PC-9 (cell line): ENCODE measurements at regions of chr18 and their contacts with region 1.

Region 1: GRCh38 chr18:48942554-48943261 is 8.1 kb downstream of the SMAD7 start:
- DNase-seq: peak; percentile 75 to 95
- H3K4me3 ChIP-seq: no peak overlapping the region; the same call in 1 of the 2 replicates
- H3K27ac ChIP-seq: peak overlapping the region; percentile 42
- H3K4me1 ChIP-seq: peaks cover 94% of the 10 kb centered on the region
- H3K27me3 ChIP-seq: no peaks in the 10 kb centered on the region
- CTCF ChIP-seq: no peak

Region 2: DNA sequence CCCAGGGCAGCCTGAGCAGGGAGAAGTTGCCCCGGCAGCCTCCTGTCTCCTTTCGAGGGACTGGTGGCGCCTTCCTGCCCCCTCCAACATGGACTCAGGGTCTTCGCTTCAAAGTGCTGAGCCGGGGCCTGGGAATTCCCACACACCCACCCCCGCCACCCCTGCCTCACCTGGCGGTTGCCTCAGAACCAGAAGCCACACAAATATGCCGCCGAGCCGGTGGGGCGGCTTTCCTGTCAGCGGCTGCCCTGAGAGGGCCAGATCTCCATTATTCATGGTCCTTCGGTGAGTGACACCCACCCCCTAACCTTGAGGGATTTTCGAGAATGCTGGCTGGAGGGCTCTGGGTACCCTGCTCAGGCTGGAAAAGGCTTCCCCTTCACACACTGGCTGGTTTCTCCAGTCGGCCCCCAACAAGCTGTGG is 63.7 kb before region 1 on chr18:
- CTCF ChIA-PET with region 1: no interaction called
- POLR2A ChIA-PET with region 1: no interaction called
- intact Hi-C with region 1: loop called (anchors 2 kb)
- DNase-seq: peak; percentile 77 to 86
- H3K4me3 ChIP-seq: peak overlapping the region; percentile 51
- H3K27ac ChIP-seq: peak overlapping the region; percentile 94
- H3K4me1 ChIP-seq: peaks cover 42% of the 10 kb centered on the region
- H3K27me3 ChIP-seq: no peaks in the 10 kb centered on the region
- CTCF ChIP-seq: no peak

Region 3: GRCh38 chr18:48997985-48998831 is 55.5 kb after region 1 on chr18:
- CTCF ChIA-PET with region 1: no interaction called
- POLR2A ChIA-PET with region 1: interaction called, 3 read pairs
- intact Hi-C with region 1: loop called (anchors 2 kb)
- DNase-seq: peak; percentile 91 to 98
- H3K4me3 ChIP-seq: peak overlapping the region; percentile 32; the same call in 1 of the 2 replicates
- H3K27ac ChIP-seq: peak overlapping the region; percentile 97
- H3K4me1 ChIP-seq: peaks cover 60% of the 10 kb centered on the region
- H3K27me3 ChIP-seq: no peaks in the 10 kb centered on the region
- CTCF ChIP-seq: no peak